Right lobe of liver (tissue), 6 donors: ENCODE measurements at regions of chr16 and their contacts with region 1.

Region 1: GRCh38 chr16:58678716-58679115 is 5.9 kb downstream of the SLC38A7 start:
- DNase-seq: peak; percentile 58 to 78 (median 74)
- ATAC-seq: peak; percentile 83 to 93 (median 88)
- H3K4me3 ChIP-seq: no peak overlapping the region
- H3K27ac ChIP-seq: no peak overlapping the region
- H3K4me1 ChIP-seq: peaks cover 0 to 6% (median 1%) of the 10 kb centered on the region in 4 donors
- H3K27me3 ChIP-seq: no peaks in the 10 kb centered on the region
- CTCF ChIP-seq: peak; percentile 50 to 80 (median 60)
- POLR2A ChIP-seq: no peak

Region 2: GRCh38 chr16:58755989-58756649 is 77.4 kb after region 1 on chr16:
- intact Hi-C with region 1: loop called (anchors 2 to 10 kb)
- DNase-seq: peak; percentile 71 to 80 (median 79)
- ATAC-seq: peak; percentile 98 to 100 (median 99)
- H3K4me3 ChIP-seq: no peak overlapping the region
- H3K27ac ChIP-seq: no peak overlapping the region
- H3K4me1 ChIP-seq: no peaks in the 10 kb centered on the region
- H3K27me3 ChIP-seq: no peaks in the 10 kb centered on the region
- CTCF ChIP-seq: peak; percentile 78 to 84 (median 80)
- POLR2A ChIP-seq: no peak